GM18951 (cell line): ENCODE measurements at regions of chr1 and their contacts with region 1.

Region 1: DNA sequence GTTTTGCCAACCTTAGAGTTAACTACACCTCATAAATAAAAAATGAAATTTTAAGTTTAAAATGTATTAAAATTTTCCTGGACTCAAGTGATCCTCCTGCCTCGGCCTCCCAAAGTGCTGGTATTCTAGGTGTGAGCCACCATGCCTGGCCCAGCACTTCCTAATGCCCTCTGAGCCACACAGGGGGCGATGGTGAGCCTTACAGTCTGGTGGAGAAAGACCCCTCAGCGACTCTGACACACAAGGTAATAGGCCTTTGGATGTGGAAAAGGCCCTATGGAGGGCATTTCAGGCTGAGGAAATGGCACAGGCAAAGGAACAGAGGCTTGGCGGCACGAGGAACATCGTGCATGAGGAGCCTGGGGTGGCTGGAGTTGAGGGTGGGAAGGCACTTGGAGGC is 6.7 kb downstream of the CITED4 start:
- POLR2A ChIP-seq: no peak

Region 2: DNA sequence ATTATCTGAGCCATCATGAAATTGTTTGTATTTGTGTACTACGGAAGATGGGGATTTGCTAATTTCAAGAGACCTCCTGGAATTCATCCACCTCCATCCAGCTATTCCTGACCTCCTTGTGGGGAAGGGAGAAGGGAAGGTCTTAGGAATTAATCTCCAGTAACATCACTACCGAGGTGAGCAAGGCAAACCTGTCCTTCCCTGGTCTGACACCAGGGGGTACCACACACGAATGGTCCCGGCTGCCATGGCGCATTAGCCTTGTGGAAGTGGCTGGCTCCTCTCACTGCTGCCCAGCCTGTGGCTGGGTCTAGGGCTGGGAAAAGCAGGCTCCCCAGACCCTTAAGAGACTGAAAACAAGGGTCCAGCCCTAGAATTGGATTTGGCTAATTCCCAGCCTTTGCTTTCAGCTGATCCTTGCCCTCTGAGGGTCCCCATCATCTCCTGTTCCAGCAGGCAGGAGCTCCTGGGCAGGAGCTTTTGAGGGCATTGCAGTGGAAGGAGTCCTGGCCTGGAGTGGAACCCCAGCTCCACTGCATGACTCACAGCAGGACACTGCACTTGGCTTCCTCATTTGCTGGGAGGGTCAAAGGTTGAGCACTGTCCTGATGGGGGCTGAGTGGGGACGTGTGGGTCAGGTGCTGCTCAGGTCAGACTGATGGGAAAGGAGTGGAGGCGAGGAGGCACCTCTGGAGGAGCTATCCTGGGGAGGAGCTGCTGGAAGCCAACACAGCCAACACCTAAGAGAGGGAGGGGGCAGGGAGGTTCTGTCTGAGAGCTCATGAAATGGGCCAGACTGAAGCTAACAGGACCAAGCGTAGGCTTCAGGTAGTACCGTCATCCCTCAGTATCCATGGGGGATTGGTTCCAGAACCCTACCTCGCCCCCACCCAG is 224.8 kb before region 1 on chr1:
- in situ Hi-C with region 1: no loop called
- POLR2A ChIP-seq: no peak

Region 3: DNA sequence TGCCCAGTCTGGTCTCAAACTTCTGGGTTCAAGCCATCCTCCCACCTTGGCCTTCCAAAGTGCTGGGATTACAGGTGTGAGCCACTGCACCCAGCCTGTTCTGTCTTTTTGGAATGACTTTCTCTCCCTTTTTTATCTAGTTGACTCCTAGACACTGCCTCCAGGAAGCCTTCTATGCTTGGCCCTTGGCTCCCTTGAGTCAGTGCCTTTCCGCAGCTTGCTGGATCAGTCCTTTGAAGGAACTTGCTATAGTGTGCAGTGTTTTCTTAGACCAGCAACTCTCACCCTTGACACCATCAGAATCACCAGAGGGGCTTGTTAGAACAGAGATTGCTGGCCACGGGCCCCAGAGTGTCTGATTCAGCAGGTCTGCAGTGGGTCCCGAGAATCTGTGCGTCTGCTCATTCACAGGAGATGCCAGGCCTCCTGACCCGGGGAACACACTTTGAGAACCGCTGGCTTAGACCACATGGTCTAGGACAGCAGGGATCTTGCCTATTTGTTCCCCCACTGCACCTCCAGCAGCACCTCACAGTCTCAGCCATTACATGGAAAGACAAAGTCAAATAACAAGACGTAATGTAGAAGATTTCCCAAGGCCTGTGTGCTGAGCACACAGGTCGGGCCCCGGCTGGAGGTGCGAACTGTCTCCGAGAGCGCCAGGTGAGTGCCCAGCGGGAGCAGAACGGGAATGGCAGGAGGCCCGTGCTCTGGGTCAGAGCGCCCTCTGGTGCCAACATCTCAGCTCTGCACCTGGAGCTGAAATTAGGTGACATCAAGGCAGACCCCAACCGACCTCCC is 96.6 kb after region 1 on chr1:
- in situ Hi-C with region 1: loop called (anchors 5 kb)
- POLR2A ChIP-seq: no peak